ENCODE measurements at regions of chr5 and their contacts with region 1.

Region 1: GRCh38 chr5:41856644-41857491 is 13.4 kb downstream of the OXCT1 start:
- DNase-seq: peak; percentile 77
- H3K4me3 ChIP-seq: no peak overlapping the region
- H3K27ac ChIP-seq: no peak overlapping the region
- H3K4me1 ChIP-seq: no peaks in the 10 kb centered on the region
- CTCF ChIP-seq: peak; percentile 92

Region 2: GRCh38 chr5:41686767-41687166 is 170.1 kb before region 1 on chr5:
- CTCF ChIA-PET with region 1: no interaction called
- POLR2A ChIA-PET with region 1: no interaction called
- intact Hi-C with region 1: no loop called
- DNase-seq: no peak
- H3K4me3 ChIP-seq: no peak overlapping the region
- H3K27ac ChIP-seq: no peak overlapping the region
- H3K4me1 ChIP-seq: no peaks in the 10 kb centered on the region
- CTCF ChIP-seq: no peak

Region 3: GRCh38 chr5:42005561-42006153 is 148.8 kb after region 1 on chr5:
- CTCF ChIA-PET with region 1: no interaction called
- POLR2A ChIA-PET with region 1: no interaction called
- intact Hi-C with region 1: loop called (anchors 2 kb)
- DNase-seq: peak; percentile 27
- H3K4me3 ChIP-seq: no peak overlapping the region
- H3K27ac ChIP-seq: no peak overlapping the region
- H3K4me1 ChIP-seq: no peaks in the 10 kb centered on the region
- CTCF ChIP-seq: peak; percentile 87

Region 4: GRCh38 chr5:42057254-42057690 is 200.4 kb after region 1 on chr5:
- CTCF ChIA-PET with region 1: interaction called, 11 read pairs
- POLR2A ChIA-PET with region 1: interaction called, 3 read pairs
- intact Hi-C with region 1: loop called (anchors 1 kb)
- DNase-seq: peak; percentile 56
- H3K4me3 ChIP-seq: no peak overlapping the region
- H3K27ac ChIP-seq: no peak overlapping the region
- H3K4me1 ChIP-seq: no peaks in the 10 kb centered on the region
- CTCF ChIP-seq: peak; percentile 87

Region 5: DNA sequence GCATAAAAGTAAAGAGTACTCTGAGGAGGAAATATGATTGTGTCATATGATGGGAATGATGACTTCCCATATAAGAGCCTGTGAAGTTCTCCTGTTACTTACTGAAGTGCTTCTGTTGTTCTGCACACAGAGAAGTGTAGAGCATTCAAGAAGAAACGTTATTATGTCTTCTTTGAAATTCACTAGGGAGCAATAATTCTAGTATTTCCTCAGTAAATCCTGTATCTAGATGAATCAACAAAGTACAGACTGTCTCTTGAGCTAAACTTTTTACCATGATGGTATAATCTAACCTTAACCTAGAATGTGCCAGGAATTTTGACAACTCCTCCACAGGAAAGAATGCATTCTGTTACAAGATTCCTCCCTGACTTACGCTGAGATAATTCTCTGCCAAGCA is 547.5 kb after region 1 on chr5:
- CTCF ChIA-PET with region 1: no interaction called
- POLR2A ChIA-PET with region 1: no interaction called
- intact Hi-C with region 1: no loop called
- DNase-seq: no peak
- H3K4me3 ChIP-seq: no peak overlapping the region
- H3K27ac ChIP-seq: no peak overlapping the region
- H3K4me1 ChIP-seq: no peaks in the 10 kb centered on the region
- CTCF ChIP-seq: no peak